Psoas muscle (tissue), 8 donors: ENCODE measurements at regions of chr2 and their contacts with region 1.

Region 1: GRCh38 chr2:63861220-63861822 is 19.6 kb downstream of the UGP2 start:
- DNase-seq: peak in 1 of 2 donors; percentile 21
- ATAC-seq: peak; percentile 42 to 63 (median 55)
- H3K4me3 ChIP-seq: no peak overlapping the region
- H3K27ac ChIP-seq: peak overlapping the region; percentile 74
- H3K4me1 ChIP-seq: peaks cover 56% of the 10 kb centered on the region
- H3K27me3 ChIP-seq: no peaks in the 10 kb centered on the region
- CTCF ChIP-seq: peak; percentile 49

Region 2: GRCh38 chr2:63588385-63589147 is 272.8 kb before region 1 on chr2 and contains the starts of genes MDH1 and WDPCP:
- intact Hi-C with region 1: loop called in 1 of 2 experiments (anchors 10 kb)
- DNase-seq: peak; percentile 93 to 95
- ATAC-seq: peak; percentile 91 to 95 (median 92)
- H3K4me3 ChIP-seq: peak within 1 kb of the TSS; percentile 79
- H3K27ac ChIP-seq: peak within 1 kb of the TSS; percentile 76
- H3K4me1 ChIP-seq: peaks cover 43% of the 10 kb centered on the region
- H3K27me3 ChIP-seq: no peaks in the 10 kb centered on the region
- CTCF ChIP-seq: no peak
- total RNA-seq, gene MDH1: 185 to 564 (median 310) TPM
- total RNA-seq, gene WDPCP: 4.4 to 17.2 (median 11.5) TPM

Region 3: GRCh38 chr2:63698825-63699548 is 162.3 kb before region 1 on chr2:
- intact Hi-C with region 1: loop called in 1 of 2 experiments (anchors 5 kb)
- DNase-seq: peak; percentile 52 to 66
- ATAC-seq: peak; percentile 89 to 93 (median 92)
- H3K4me3 ChIP-seq: no peak overlapping the region
- H3K27ac ChIP-seq: peak overlapping the region; percentile 38
- H3K4me1 ChIP-seq: no peaks in the 10 kb centered on the region
- H3K27me3 ChIP-seq: no peaks in the 10 kb centered on the region
- CTCF ChIP-seq: peak; percentile 54